ENCODE measurements at regions of chr2 and their contacts with region 1.

Region 1: GRCh38 chr2:16773080-16773713 is 107.6 kb upstream of the CYRIA start:
- DNase-seq: peak; percentile 55
- H3K4me3 ChIP-seq: no peak overlapping the region
- H3K27ac ChIP-seq: no peak overlapping the region
- H3K4me1 ChIP-seq: no peaks in the 10 kb centered on the region
- H3K27me3 ChIP-seq: peaks cover 3% of the 10 kb centered on the region
- CTCF ChIP-seq: peak; percentile 57 to 73

Region 2: GRCh38 chr2:17148407-17149145 is 375.4 kb after region 1 on chr2:
- CTCF ChIA-PET with region 1: no interaction called
- dilution Hi-C with region 1: no loop called
- in situ Hi-C with region 1: no loop called
- intact Hi-C with region 1: loop called (anchors 1 kb)
- DNase-seq: peak; percentile 15
- H3K4me3 ChIP-seq: no peak overlapping the region
- H3K27ac ChIP-seq: no peak overlapping the region
- H3K4me1 ChIP-seq: no peaks in the 10 kb centered on the region
- H3K27me3 ChIP-seq: no peaks in the 10 kb centered on the region
- CTCF ChIP-seq: peak; percentile 57 to 61

Region 3: DNA sequence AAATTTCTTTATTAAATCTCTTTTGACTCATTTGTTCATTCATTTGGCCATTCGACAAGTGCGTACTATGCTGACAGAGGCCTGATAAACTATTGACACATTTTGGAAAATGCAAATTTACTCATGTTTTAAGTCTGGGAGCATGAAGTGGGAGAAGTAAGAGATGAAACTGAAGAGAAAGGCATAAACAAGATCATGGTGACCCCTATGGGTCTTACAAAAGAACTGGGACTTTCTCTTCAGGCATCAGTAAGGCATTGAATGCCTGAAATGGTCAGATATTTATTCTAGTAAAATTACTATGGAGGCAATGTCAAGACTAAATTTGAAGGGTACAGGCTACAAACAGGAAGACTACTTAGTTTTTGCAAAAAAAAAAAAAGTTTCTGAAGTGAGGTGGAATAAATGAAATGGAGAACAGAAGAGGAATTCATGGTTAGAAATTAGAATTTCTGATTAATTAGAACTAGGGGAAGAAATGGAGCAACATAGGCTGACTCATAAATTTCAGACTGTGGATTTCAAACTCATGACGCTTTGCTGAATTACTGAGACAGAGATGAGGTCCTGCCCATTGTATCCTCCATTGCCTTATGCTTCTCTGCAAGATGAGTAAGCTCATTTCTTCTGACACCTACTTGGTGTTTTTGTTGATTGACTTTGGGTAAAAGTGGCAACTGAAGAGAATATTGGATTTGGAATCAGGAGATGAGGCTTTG is 800.0 kb after region 1 on chr2:
- CTCF ChIA-PET with region 1: no interaction called
- dilution Hi-C with region 1: no loop called
- in situ Hi-C with region 1: no loop called
- intact Hi-C with region 1: loop called (anchors 1 kb)
- DNase-seq: peak; percentile 68
- H3K4me3 ChIP-seq: no peak overlapping the region
- H3K27ac ChIP-seq: peak overlapping the region; percentile 27
- H3K4me1 ChIP-seq: peaks cover 14% of the 10 kb centered on the region
- H3K27me3 ChIP-seq: no peaks in the 10 kb centered on the region
- CTCF ChIP-seq: peak in 1 of 2 donors; percentile 34

Region 4: GRCh38 chr2:17628349-17629261 is 855.4 kb after region 1 on chr2:
- CTCF ChIA-PET with region 1: no interaction called
- dilution Hi-C with region 1: no loop called
- in situ Hi-C with region 1: no loop called
- intact Hi-C with region 1: loop called (anchors 1 kb)
- DNase-seq: peak; percentile 44
- H3K4me3 ChIP-seq: no peak overlapping the region
- H3K27ac ChIP-seq: no peak overlapping the region
- H3K4me1 ChIP-seq: peaks cover 23% of the 10 kb centered on the region
- H3K27me3 ChIP-seq: no peaks in the 10 kb centered on the region
- CTCF ChIP-seq: no peak

Region 5: GRCh38 chr2:17672583-17673317 is 899.6 kb after region 1 on chr2:
- CTCF ChIA-PET with region 1: interaction called, 3 read pairs
- dilution Hi-C with region 1: no loop called
- in situ Hi-C with region 1: loop called (anchors 10 kb)
- intact Hi-C with region 1: loop called (anchors 2 kb)
- DNase-seq: peak; percentile 80
- H3K4me3 ChIP-seq: no peak overlapping the region
- H3K27ac ChIP-seq: peak overlapping the region; percentile 60
- H3K4me1 ChIP-seq: no peaks in the 10 kb centered on the region
- H3K27me3 ChIP-seq: no peaks in the 10 kb centered on the region
- CTCF ChIP-seq: peak in 1 of 2 donors; percentile 15